Activated CD8-positive, alpha-beta T cell treated with anti-CD3 and anti-CD28 coated beads, Interleukin-2, amount 10 ng/mL, durations not matched to agents 7 days and 5 days (primary cell): ENCODE measurements at regions of chr19 and their contacts with region 1.

Region 1: GRCh38 chr19:48899781-48900476 is at the start of gene NUCB1:
- DNase-seq: peak; percentile 100
- ATAC-seq: peak; percentile 92
- H3K4me3 Mint-ChIP-seq: peak within 1 kb of the TSS; percentile 98
- H3K27ac Mint-ChIP-seq: peak within 1 kb of the TSS; percentile 96
- H3K4me1 Mint-ChIP-seq: peaks cover 42% of the 10 kb centered on the region
- H3K27me3 Mint-ChIP-seq: peaks cover 8% of the 10 kb centered on the region
- total RNA-seq, gene NUCB1: 229 to 236 TPM

Region 2: DNA sequence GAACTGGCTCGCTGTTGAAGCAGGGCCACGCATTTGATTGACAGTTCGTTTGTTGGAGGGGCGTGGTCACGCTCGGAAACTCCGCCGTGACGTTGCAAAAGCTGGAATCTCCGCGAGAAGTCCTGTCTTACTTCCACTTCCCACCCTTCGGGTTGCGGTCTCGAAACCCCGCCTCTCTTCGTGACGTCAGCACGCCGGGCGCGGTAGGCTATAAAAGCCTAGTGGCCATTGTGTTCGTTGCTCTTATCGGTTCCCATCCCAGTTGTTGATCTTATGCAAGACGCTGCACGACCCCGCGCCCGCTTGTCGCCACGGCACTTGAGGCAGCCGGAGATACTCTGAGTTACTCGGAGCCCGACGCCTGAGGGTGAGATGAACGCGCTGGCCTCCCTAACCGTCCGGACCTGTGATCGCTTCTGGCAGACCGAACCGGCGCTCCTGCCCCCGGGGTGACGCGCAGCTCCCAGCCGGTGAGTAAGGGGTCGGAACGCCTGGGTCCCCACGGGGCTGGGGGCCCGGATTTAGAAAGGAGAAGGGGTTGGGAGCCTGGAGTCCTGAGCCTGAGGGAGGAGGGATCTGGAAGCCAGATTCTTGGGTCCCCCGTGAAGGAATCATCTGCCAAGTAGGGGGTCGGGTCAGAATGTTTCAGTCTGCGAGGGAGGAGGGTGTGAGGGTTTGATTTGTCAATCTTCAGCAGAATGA is 27.6 kb before region 1 on chr19 and contains the start of gene PPP1R15A:
- CTCF ChIA-PET with region 1: interaction called, 7 read pairs
- POLR2A ChIA-PET with region 1: interaction called, 74 read pairs
- DNase-seq: peak; percentile 99
- ATAC-seq: peak; percentile 47
- H3K4me3 Mint-ChIP-seq: peak within 1 kb of the TSS; percentile 99
- H3K27ac Mint-ChIP-seq: peak within 1 kb of the TSS; percentile 98
- H3K4me1 Mint-ChIP-seq: peaks cover 42% of the 10 kb centered on the region
- H3K27me3 Mint-ChIP-seq: no peaks in the 10 kb centered on the region
- total RNA-seq, gene PPP1R15A: 104 to 124 TPM

Region 3: DNA sequence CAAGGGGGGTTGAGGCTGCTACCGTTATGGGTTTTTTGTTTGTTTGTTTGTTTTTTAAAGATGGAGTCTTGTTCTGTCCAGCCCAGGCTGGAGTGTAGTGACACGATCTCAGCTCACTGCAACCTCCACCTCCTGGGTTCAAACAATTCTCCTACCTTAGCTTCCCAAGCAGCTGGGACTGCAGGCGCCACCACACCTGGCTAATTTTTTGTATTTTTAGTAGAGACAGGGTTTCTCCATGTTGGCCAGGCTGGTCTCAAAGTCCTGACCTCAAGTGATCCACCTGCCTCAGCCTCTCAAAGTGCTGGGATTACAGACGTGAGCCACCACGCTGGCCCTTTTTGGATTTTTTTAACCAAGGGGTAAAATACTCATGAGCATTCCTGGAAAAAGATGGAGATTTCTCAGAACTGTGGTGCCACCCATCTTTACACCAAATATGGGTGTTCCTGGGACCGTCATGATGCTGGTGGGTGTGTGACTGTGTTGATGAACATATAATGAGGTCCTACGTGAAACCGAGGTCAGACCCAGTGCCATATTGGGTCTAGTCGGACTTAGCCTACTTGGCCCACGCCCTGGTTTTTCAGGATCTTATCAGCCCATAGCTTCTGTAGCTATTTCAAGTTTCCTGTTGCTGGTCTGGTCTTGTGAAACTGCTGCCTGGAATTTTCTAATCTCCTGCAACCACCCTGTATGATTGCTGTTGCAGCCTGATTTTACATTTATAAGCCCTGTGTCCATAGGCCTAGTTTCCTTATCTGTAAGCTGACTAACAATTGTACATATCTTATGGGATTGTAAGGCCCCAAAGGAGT is 21.5 kb before region 1 on chr19:
- CTCF ChIA-PET with region 1: interaction called, 7 read pairs
- POLR2A ChIA-PET with region 1: interaction called, 74 read pairs
- DNase-seq: peak; percentile 49
- ATAC-seq: peak; percentile 5
- H3K4me3 Mint-ChIP-seq: no peak overlapping the region
- H3K27ac Mint-ChIP-seq: peak overlapping the region; percentile 65
- H3K4me1 Mint-ChIP-seq: peaks cover 47% of the 10 kb centered on the region
- H3K27me3 Mint-ChIP-seq: no peaks in the 10 kb centered on the region

Region 4: GRCh38 chr19:48887861-48888612 is 11.9 kb before region 1 on chr19:
- CTCF ChIA-PET with region 1: interaction called, 10 read pairs
- POLR2A ChIA-PET with region 1: interaction called, 4 read pairs
- DNase-seq: no peak
- ATAC-seq: no peak
- H3K4me3 Mint-ChIP-seq: no peak overlapping the region
- H3K27ac Mint-ChIP-seq: no peak overlapping the region
- H3K4me1 Mint-ChIP-seq: no peaks in the 10 kb centered on the region
- H3K27me3 Mint-ChIP-seq: peaks cover 11% of the 10 kb centered on the region

Region 5: GRCh38 chr19:48954595-48955310 is 54.8 kb after region 1 on chr19 and contains the start of gene BAX:
- CTCF ChIA-PET with region 1: interaction called, 3 read pairs
- POLR2A ChIA-PET with region 1: interaction called, 10 read pairs
- DNase-seq: peak; percentile 96
- ATAC-seq: peak; percentile 87
- H3K4me3 Mint-ChIP-seq: peak within 1 kb of the TSS; percentile 77
- H3K27ac Mint-ChIP-seq: peak within 1 kb of the TSS; percentile 85
- H3K4me1 Mint-ChIP-seq: peaks cover 39% of the 10 kb centered on the region
- H3K27me3 Mint-ChIP-seq: no peaks in the 10 kb centered on the region
- total RNA-seq, gene BAX: 336 to 350 TPM

Region 6: DNA sequence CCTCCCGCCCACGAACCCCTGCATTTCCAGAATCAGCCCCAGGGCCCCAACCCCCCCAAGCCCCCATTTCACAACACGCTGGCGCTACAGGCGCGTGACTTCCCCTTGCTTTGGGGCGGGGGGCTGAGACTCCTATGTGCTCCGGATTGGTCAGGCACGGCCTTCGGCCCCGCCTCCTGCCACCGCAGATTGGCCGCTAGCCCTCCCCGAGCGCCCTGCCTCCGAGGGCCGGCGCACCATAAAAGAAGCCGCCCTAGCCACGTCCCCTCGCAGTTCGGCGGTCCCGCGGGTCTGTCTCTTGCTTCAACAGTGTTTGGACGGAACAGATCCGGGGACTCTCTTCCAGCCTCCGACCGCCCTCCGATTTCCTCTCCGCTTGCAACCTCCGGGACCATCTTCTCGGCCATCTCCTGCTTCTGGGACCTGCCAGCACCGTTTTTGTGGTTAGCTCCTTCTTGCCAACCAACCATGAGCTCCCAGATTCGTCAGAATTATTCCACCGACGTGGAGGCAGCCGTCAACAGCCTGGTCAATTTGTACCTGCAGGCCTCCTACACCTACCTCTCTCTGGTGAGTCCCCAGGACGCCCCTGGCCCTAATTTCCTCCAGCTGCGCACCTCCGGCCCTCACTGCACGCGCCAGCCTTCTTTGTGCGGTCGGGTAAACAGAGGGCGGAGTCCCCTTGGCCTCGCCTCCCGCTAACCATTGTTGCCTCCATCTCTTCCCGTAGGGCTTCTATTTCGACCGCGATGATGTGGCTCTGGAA is 65.3 kb after region 1 on chr19 and contains the start of gene FTL:
- CTCF ChIA-PET with region 1: interaction called, 17 read pairs
- POLR2A ChIA-PET with region 1: interaction called, 15 read pairs
- DNase-seq: peak; percentile 94
- ATAC-seq: peak; percentile 72
- H3K4me3 Mint-ChIP-seq: peak within 1 kb of the TSS; percentile 96
- H3K27ac Mint-ChIP-seq: peak within 1 kb of the TSS; percentile 96
- H3K4me1 Mint-ChIP-seq: peaks cover 73% of the 10 kb centered on the region
- H3K27me3 Mint-ChIP-seq: no peaks in the 10 kb centered on the region
- total RNA-seq, gene FTL: 971 to 1,027 TPM

Region 7: DNA sequence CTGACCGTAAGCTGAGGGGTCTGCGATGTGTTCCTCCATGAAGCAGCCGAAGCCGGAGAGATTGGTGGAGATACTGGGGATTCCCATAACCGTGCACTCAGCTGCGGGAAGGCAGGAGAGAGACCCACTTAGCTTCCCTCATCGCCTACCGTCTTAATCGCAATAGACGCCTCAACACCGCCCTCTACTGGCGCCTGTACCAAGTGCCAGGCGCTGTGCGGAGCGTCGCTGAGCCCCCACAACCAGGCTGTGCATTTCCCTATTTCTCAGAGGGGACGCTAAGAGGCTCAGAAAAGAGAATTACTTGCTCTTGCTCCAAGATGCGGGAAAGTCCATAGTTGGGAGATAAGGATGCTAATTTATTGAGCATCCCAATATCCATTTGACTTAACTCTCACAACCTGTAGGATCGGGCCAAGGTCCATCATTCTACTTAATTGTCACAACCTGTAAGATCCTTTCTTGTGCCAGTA is 71.0 kb after region 1 on chr19:
- CTCF ChIA-PET with region 1: interaction called, 17 read pairs
- POLR2A ChIA-PET with region 1: interaction called, 7 read pairs
- DNase-seq: peak; percentile 89
- ATAC-seq: peak; percentile 68
- H3K4me3 Mint-ChIP-seq: no peak overlapping the region
- H3K27ac Mint-ChIP-seq: no peak overlapping the region
- H3K4me1 Mint-ChIP-seq: peaks cover 31% of the 10 kb centered on the region
- H3K27me3 Mint-ChIP-seq: no peaks in the 10 kb centered on the region